ENCODE measurements at regions of chr7 and their contacts with region 1.

Region 1: DNA sequence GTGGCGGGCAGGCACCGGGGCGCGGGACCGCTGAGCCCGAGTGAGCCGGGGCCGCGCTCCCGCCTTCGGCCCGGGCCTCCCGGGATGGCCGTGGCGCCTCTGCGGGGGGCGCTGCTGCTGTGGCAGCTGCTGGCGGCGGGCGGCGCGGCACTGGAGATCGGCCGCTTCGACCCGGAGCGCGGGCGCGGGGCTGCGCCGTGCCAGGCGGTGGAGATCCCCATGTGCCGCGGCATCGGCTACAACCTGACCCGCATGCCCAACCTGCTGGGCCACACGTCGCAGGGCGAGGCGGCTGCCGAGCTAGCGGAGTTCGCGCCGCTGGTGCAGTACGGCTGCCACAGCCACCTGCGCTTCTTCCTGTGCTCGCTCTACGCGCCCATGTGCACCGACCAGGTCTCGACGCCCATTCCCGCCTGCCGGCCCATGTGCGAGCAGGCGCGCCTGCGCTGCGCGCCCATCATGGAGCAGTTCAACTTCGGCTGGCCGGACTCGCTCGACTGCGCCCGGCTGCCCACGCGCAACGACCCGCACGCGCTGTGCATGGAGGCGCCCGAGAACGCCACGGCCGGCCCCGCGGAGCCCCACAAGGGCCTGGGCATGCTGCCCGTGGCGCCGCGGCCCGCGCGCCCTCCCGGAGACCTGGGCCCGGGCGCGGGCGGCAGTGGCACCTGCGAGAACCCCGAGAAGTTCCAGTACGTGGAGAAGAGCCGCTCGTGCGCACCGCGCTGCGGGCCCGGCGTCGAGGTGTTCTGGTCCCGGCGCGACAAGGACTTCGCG is 534 bp downstream of the FZD9 start:
- ATAC-seq: peak in 6 of 8 experiments; percentile 7 to 45 (median 36)
- H3K4me3 ChIP-seq: peak overlapping the region; percentile 46 to 63 (median 60)
- H3K27ac ChIP-seq: peak overlapping the region; percentile 55 to 71
- H3K4me1 ChIP-seq: peaks cover 41 to 54% of the 10 kb centered on the region in 2 donors

Region 2: GRCh38 chr7:73342645-73343044 is 91.5 kb before region 1 on chr7:
- in situ Hi-C with region 1: loop called in 1 of 9 experiments (anchors 25 kb)
- ATAC-seq: peak; percentile 69 to 92 (median 84)
- H3K4me3 ChIP-seq: no peak overlapping the region
- H3K27ac ChIP-seq: no peak overlapping the region
- H3K4me1 ChIP-seq: peaks cover 5 to 26% of the 10 kb centered on the region in 2 donors